WTC11 (cell line): ENCODE measurements at regions of chrX and their contacts with region 1.

Region 1: DNA sequence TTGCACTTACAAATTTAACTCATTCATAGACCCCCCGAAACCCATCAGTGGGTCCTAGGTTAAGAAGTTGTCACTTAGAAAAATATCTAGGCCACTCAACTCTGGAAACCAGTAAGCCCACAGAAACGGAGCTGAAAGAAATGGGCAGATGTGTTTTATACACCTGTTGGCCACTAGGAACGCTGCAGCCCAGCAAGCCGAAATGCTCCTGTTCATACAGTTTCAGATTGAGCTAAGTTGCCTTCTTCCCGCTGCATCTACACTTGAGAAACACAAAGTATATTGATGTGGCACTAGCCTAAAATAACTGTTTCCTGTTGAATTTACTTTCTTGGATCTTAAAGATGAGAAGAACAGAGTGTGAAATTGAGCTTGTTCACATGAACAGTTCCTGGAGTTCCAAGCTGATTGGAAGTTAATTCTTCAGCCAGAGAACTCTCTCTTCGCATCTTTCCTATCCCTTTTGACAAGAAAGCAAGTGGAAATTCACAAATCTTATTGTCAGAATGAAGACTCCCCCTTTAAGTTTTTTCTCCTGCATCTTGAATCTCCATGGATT is 174.1 kb downstream of the RBMX2 start:
- DNase-seq: peak; percentile 36
- ATAC-seq: peak; percentile 72
- H3K4me3 Mint-ChIP-seq: no peak overlapping the region
- H3K27ac Mint-ChIP-seq: no peak overlapping the region
- H3K4me1 Mint-ChIP-seq: peaks cover 4% of the 10 kb centered on the region; the same call in 1 of the 2 replicates
- H3K27me3 Mint-ChIP-seq: no peaks in the 10 kb centered on the region
- CTCF ChIP-seq: peak; percentile 52; the same call in 1 of the 2 replicates

Region 2: DNA sequence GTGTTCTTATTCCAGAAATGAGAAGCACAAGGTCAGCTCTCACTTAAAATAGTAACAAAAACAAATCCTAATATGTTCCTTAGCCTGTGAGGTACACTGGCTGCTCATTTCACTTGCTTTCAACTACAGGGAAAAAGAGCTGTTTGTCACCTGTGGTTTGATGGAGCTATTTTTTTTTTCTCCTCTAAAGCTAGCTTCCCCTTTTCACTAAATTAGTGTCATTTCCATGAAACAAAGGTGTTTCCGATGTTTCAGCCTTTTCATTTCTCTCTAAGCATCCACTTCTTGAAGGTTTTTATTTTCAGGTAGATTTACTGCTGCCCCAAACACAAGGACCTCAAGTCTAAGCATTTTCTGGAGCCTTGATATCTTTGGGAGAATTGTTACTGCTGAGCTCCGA is 25.6 kb before region 1 on chrX:
- CTCF ChIA-PET with region 1: interaction called, 10 read pairs
- POLR2A ChIA-PET with region 1: no interaction called
- DNase-seq: no peak
- ATAC-seq: no peak
- H3K4me3 Mint-ChIP-seq: no peak overlapping the region
- H3K27ac Mint-ChIP-seq: no peak overlapping the region
- H3K4me1 Mint-ChIP-seq: peaks cover 11% of the 10 kb centered on the region
- H3K27me3 Mint-ChIP-seq: no peaks in the 10 kb centered on the region
- CTCF ChIP-seq: no peak

Region 3: GRCh38 chrX:130592204-130592603 is 16.3 kb after region 1 on chrX:
- CTCF ChIA-PET with region 1: no interaction called
- POLR2A ChIA-PET with region 1: no interaction called
- DNase-seq: no peak
- ATAC-seq: no peak
- H3K4me3 Mint-ChIP-seq: no peak overlapping the region
- H3K27ac Mint-ChIP-seq: no peak overlapping the region
- H3K4me1 Mint-ChIP-seq: peaks cover 2% of the 10 kb centered on the region; the same call in 1 of the 2 replicates
- H3K27me3 Mint-ChIP-seq: no peaks in the 10 kb centered on the region
- CTCF ChIP-seq: no peak

Region 4: GRCh38 chrX:130741584-130741983 is 165.7 kb after region 1 on chrX:
- CTCF ChIA-PET with region 1: interaction called, 11 read pairs
- POLR2A ChIA-PET with region 1: no interaction called
- DNase-seq: no peak
- ATAC-seq: no peak
- H3K4me3 Mint-ChIP-seq: no peak overlapping the region
- H3K27ac Mint-ChIP-seq: no peak overlapping the region
- H3K4me1 Mint-ChIP-seq: peaks cover 26% of the 10 kb centered on the region
- H3K27me3 Mint-ChIP-seq: peaks cover 27% of the 10 kb centered on the region
- CTCF ChIP-seq: no peak

Region 5: GRCh38 chrX:130902783-130903613 is 327.1 kb after region 1 on chrX and contains the start of gene ENOX2:
- CTCF ChIA-PET with region 1: interaction called, 11 read pairs
- POLR2A ChIA-PET with region 1: no interaction called
- DNase-seq: peak; percentile 87
- ATAC-seq: peak; percentile 97
- H3K4me3 Mint-ChIP-seq: no peak within 1 kb of the TSS
- H3K27ac Mint-ChIP-seq: peak within 1 kb of the TSS; percentile 89
- H3K4me1 Mint-ChIP-seq: peaks cover 5% of the 10 kb centered on the region; the same call in 1 of the 2 replicates
- H3K27me3 Mint-ChIP-seq: peaks cover 4% of the 10 kb centered on the region
- CTCF ChIP-seq: no peak
- total RNA-seq, gene ENOX2: 9.5 to 13.8 TPM (median 11.7 TPM) in 3 replicates

Region 6: DNA sequence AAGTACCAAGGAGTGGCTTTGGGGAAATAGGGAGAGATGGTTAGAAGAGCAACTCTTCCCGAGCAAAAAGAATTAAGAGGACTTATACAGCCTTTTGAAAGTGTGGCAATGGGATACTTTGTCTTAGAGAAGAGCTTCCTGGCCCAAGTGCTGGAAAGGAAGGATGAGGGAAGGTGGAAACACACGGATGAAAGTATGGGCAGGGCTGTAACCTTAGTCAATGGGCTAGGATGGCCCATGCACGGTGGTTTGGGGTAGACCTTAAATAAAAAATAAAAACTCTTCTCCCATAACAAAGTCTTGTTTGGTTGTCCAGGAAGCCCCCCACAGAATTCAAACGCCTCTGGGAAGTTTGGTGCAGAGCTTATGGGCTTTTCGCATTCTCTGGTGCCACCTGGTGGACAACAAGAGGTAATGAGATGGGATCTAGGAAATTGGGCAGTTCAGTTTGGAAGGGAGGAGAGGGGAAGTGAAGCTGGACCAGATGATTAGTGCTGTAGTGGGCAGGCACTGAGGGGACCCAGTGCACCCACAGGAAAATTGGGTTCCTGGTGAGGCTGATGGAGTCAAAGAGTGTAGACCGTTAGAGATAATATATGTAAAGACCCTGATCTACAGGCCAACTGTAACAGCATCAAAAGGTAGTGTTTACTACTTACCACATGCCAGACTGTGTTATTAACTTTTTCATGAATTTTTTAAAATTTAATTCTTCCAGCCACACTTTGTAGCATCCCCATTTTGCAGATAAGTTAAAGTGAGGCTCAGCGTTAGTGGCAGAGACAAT is 340.9 kb after region 1 on chrX:
- CTCF ChIA-PET with region 1: interaction called, 63 read pairs
- POLR2A ChIA-PET with region 1: no interaction called
- DNase-seq: peak; percentile 22
- ATAC-seq: peak; percentile 56
- H3K4me3 Mint-ChIP-seq: no peak overlapping the region
- H3K27ac Mint-ChIP-seq: no peak overlapping the region
- H3K4me1 Mint-ChIP-seq: peaks cover 8% of the 10 kb centered on the region
- H3K27me3 Mint-ChIP-seq: no peaks in the 10 kb centered on the region
- CTCF ChIP-seq: peak; percentile 56; the same call in 1 of the 2 replicates